Aorta (tissue), 5 donors: ENCODE measurements at regions of chr1 and their contacts with region 1.

Region 1: DNA sequence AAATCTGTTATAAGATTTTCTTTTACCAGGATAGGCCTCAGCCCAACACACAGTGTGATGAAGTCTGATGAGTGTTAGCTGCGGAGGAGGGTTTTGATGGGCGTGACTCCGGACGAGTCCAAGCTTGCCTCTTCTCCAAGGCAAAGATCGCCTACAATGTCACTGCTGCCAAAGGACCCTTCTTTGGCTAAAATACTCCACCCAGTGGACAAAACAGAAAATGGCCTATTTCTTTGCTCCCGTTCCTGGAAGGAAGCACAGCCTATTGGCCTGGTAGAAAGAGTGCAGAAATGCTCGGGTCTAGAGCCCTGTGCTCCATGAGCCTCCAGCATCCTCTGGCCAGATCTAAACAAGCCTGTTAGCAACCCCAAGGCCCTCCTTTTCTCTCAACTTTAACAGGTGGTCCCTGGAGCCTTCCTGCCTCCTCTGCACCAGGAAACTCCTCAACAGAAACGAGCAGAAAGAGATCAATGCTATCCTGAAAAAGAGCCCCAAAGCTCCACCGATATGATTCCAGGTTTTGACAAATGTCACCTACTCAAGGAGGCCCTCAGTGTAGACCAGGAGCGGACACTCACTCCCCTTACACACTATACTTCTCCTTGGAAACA is 3.4 kb upstream of the CASQ2 start:
- DNase-seq: peak; percentile 70 to 84
- ATAC-seq: peak; percentile 87
- H3K4me3 ChIP-seq: peak overlapping the region in 1 of 2 donors; percentile 21
- H3K27ac ChIP-seq: no peak overlapping the region
- H3K4me1 ChIP-seq: no peaks in the 10 kb centered on the region
- H3K27me3 ChIP-seq: peaks cover 0 to 2% of the 10 kb centered on the region in 2 donors

Region 2: GRCh38 chr1:115609021-115609420 is 162.9 kb before region 1 on chr1:
- intact Hi-C with region 1: loop called (anchors 2 to 5 kb)
- DNase-seq: no peak
- ATAC-seq: no peak
- H3K4me3 ChIP-seq: no peak overlapping the region
- H3K27ac ChIP-seq: no peak overlapping the region
- H3K4me1 ChIP-seq: no peaks in the 10 kb centered on the region
- H3K27me3 ChIP-seq: no peaks in the 10 kb centered on the region

Region 3: DNA sequence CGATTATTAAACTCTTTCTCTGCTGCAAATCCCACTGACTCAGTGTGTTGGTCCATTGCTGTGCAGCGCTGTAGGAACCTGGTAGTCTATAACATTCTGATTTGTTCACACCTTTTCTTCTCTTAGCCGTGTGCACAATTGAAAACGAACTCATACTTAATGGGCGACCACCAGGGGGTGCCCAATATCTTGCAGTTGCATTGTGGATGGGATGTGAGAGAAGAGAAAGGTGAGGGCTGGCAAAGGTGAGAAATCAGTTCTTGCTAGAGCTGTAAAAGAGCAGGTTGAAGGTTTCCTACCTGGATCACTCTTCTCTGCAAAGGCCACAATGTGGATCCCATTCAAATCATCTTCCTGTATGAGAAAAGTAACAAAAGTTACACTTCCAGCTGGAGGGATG is 54.4 kb before region 1 on chr1:
- intact Hi-C with region 1: loop called (anchors 1 to 5 kb)
- DNase-seq: peak in 1 of 2 donors; percentile 54
- ATAC-seq: no peak
- H3K4me3 ChIP-seq: no peak overlapping the region
- H3K27ac ChIP-seq: no peak overlapping the region
- H3K4me1 ChIP-seq: no peaks in the 10 kb centered on the region
- H3K27me3 ChIP-seq: no peaks in the 10 kb centered on the region